ENCODE measurements at regions of chr15 and their contacts with region 1.

Region 1: DNA sequence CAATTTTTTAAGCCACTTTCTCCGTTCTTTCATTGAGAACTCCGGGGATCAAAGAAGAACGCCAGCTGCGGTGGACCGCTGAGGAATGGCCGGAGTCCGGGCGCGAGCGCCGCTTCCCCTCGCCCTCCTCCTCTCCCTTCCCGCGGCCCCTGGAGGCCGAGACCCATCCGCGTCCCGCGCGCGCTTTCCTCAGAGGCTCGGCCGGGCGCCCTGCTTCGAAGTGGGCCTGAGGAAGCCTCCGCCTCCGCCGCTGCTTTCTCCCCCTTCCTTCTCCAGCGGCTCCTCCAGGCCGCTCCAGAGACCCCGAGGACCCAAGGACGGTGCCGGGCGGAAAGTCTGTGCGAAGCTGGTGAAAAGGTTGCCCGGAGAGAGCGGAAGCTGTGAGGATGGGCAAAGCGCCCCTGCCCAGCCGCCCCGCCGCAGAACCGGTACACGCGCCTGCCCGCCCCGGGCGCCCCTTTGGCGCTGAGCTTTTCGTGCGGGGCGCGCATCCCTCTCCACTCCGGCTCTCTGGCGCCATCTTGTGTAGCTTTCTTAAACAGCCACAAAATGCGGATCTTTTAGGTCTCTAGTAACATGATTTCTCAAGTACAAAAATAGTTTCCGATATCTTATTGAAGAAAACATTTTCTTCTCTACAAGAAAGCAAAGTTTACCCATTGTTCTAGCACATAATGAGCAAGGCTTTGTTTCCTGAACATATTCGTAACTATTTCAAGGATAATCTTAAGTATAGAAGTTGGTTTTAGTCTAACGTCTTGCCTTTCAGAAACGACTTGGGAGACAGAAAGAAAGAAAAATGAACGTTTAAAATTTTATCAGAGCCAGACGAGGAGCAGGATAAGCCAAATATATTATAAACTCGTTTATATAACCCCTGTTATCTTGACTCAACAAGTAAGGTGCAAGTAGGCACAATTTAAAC is 59.2 kb upstream of the FAM174B start:
- DNase-seq: peak; percentile 47 to 74
- H3K4me3 ChIP-seq: peak overlapping the region; percentile 60
- H3K27ac ChIP-seq: no peak overlapping the region
- H3K4me1 ChIP-seq: 0 out of 2 replicates have a peak, but pooled peaks cover 5% of the 10 kb centered on the region
- H3K27me3 ChIP-seq: no peaks in the 10 kb centered on the region
- CTCF ChIP-seq: peak; percentile 94

Region 2: GRCh38 chr15:92091155-92091734 is 623.5 kb before region 1 on chr15:
- CTCF ChIA-PET with region 1: no interaction called
- POLR2A ChIA-PET with region 1: no interaction called
- intact Hi-C with region 1: loop called (anchors 2 kb)
- DNase-seq: peak in 1 of 2 experiments; percentile 66
- H3K4me3 ChIP-seq: no peak overlapping the region
- H3K27ac ChIP-seq: no peak overlapping the region
- H3K4me1 ChIP-seq: no peaks in the 10 kb centered on the region
- H3K27me3 ChIP-seq: no peaks in the 10 kb centered on the region
- CTCF ChIP-seq: peak; percentile 84

Region 3: DNA sequence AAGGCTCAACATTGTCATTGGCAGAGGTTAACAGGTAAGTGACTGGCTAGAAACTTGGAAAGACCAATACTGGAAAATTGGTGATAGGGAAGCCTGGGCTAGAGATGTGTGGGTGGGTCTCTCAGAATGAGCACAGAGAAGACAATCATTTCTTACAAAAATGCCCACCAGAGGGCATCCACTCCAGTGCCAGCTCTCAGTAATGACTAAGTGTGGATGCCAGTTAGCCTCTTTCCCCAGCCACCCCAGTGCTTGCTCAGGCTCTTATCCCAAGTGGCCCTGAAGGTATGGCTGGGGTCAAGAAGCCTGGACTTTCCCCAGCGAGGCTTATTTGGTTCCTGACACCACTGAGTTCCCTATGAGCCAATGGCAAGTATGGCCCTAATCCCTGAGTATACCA is 437.0 kb before region 1 on chr15:
- CTCF ChIA-PET with region 1: no interaction called
- POLR2A ChIA-PET with region 1: no interaction called
- intact Hi-C with region 1: loop called (anchors 1 kb)
- DNase-seq: peak in 1 of 2 experiments; percentile 5
- H3K4me3 ChIP-seq: no peak overlapping the region
- H3K27ac ChIP-seq: no peak overlapping the region
- H3K4me1 ChIP-seq: no peaks in the 10 kb centered on the region
- H3K27me3 ChIP-seq: peaks cover 39% of the 10 kb centered on the region
- CTCF ChIP-seq: peak; percentile 56

Region 4: GRCh38 chr15:92391640-92392039 is 323.1 kb before region 1 on chr15:
- CTCF ChIA-PET with region 1: interaction called, 3 read pairs
- POLR2A ChIA-PET with region 1: no interaction called
- intact Hi-C with region 1: loop called (anchors 1 kb)
- DNase-seq: peak; percentile 3 to 36
- H3K4me3 ChIP-seq: no peak overlapping the region
- H3K27ac ChIP-seq: no peak overlapping the region
- H3K4me1 ChIP-seq: no peaks in the 10 kb centered on the region
- H3K27me3 ChIP-seq: peaks cover 61% of the 10 kb centered on the region
- CTCF ChIP-seq: peak; percentile 60

Region 5: DNA sequence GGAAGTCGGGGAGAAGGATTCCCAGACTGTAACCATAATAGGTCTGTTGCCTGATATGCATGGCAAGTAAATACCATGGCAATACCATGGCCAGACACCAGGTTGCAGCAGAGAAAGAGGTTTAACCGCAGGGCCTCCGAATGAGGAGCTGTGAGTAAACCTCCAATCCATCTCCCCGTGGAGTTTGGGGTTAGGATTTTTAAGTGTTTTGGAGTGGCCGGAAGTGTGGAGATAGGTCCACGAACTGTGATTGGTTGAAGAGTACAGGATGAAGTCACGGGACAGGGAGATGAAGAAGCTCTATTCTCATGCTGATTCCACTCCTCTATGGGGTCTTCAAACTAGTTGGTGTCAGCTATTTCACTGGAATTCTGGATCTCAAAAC is 193.1 kb before region 1 on chr15:
- CTCF ChIA-PET with region 1: interaction called, 15 read pairs
- POLR2A ChIA-PET with region 1: interaction called, 6 read pairs
- intact Hi-C with region 1: loop called (anchors 1 kb)
- DNase-seq: peak; percentile 57 to 66
- H3K4me3 ChIP-seq: no peak overlapping the region
- H3K27ac ChIP-seq: no peak overlapping the region
- H3K4me1 ChIP-seq: no peaks in the 10 kb centered on the region
- H3K27me3 ChIP-seq: no peaks in the 10 kb centered on the region
- CTCF ChIP-seq: peak; percentile 77

Region 6: GRCh38 chr15:92611993-92612745 is 102.6 kb before region 1 on chr15:
- CTCF ChIA-PET with region 1: no interaction called
- POLR2A ChIA-PET with region 1: no interaction called
- intact Hi-C with region 1: loop called (anchors 2 kb)
- DNase-seq: no peak
- H3K4me3 ChIP-seq: no peak overlapping the region
- H3K27ac ChIP-seq: no peak overlapping the region
- H3K4me1 ChIP-seq: no peaks in the 10 kb centered on the region
- H3K27me3 ChIP-seq: no peaks in the 10 kb centered on the region
- CTCF ChIP-seq: no peak

Region 7: DNA sequence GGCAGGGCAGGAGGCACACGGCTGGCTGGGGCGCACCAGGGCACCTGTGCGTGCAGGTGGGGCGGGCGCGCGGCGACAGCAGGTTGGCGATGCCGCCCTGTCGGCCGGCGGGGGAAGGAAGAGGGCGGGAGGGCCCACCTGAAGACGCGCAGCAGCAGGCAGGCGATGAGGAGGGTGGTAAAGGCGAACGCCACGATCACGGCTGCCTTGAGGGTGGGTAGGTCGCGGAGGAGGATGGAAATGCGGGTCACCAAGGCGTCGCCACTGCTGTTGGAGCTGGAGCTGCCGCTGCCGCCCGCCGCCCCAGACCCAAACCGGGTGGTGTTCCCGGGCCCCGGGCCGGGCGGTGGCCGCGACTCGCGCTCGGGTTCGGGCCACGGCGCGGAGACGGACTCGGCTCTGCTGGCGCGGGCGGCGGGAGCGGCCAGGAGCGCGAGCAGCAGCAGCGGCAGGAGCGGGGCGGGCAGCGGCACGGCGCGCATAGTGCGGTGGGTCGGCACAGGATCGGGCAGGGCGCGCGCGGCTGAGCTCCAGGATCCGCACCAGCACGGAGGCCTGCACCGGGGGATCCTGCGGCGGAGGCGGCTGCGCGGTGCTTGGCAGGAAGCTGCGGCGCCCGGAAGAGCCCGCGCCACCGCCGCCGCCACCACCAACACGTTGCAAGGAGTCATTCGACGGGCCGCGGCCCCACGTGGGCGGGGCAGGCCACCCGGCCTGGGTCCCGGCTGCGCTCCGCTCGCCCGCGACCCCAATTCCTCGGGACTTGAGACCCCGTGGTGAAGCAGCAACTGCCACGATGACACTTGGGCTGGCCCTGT is 59.4 kb before region 1 on chr15 and contains the start of gene FAM174B:
- CTCF ChIA-PET with region 1: no interaction called
- POLR2A ChIA-PET with region 1: interaction called, 5 read pairs
- intact Hi-C with region 1: loop called (anchors 2 kb)
- DNase-seq: peak in 1 of 2 experiments; percentile 51
- H3K4me3 ChIP-seq: peak within 1 kb of the TSS; percentile 55
- H3K27ac ChIP-seq: peak within 1 kb of the TSS; percentile 85
- H3K4me1 ChIP-seq: peaks cover 55% of the 10 kb centered on the region
- H3K27me3 ChIP-seq: no peaks in the 10 kb centered on the region
- CTCF ChIP-seq: no peak
- total RNA-seq, gene FAM174B: 77.5 and 90.3 TPM in 2 replicates

Region 8: GRCh38 chr15:92733934-92734521 is 19.3 kb after region 1 on chr15:
- CTCF ChIA-PET with region 1: no interaction called
- POLR2A ChIA-PET with region 1: no interaction called
- intact Hi-C with region 1: no loop called
- DNase-seq: no peak
- H3K4me3 ChIP-seq: no peak overlapping the region
- H3K27ac ChIP-seq: no peak overlapping the region
- H3K4me1 ChIP-seq: no peaks in the 10 kb centered on the region
- H3K27me3 ChIP-seq: no peaks in the 10 kb centered on the region
- CTCF ChIP-seq: no peak